Activated CD4-positive, alpha-beta T cell treated with anti-CD3 and anti-CD28 coated beads, Interleukin-2, amount 10 ng/mL, durations not matched to agents 24 days and 14 days (primary cell): ENCODE measurements at regions of chr1 and their contacts with region 1.

Region 1: DNA sequence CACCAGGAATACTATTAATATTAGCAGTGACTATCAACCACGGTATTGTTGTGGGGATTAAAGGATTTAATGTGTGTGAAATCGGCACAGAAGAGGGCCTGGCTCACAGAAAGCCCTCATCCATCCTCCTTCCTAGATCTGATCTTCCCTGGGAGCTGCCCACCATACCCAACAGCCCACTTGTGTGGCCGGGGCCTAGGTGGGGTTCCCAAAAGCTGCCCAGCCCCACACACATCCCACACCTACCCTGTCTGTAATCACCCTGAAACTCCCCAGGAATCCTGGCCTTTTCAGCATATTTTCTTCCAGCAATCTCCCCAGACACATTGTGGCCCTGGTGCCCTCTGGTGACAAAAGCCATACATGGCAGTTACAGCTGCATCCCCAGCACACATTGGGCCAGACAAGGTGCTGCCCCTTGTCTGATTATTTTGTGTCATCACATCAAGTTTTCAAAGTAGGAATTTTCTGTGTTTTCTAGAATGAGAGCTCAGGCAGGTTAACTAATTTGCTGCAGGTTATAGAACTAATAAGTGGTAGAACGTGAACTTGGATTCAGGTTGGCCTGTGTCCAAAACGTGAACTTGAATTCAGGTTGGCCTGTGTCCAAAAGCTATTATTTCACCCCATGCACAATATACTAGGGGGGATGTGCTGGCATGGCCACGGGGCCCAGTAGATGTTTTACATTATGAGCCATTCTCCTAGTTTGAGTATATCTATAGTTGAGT is 5.3 kb upstream of the SLC6A9 start:
- DNase-seq: peak; percentile 91
- H3K4me3 Mint-ChIP-seq: no peak overlapping the region
- H3K27ac Mint-ChIP-seq: peak overlapping the region; percentile 18
- H3K4me1 Mint-ChIP-seq: peaks cover 14% of the 10 kb centered on the region
- H3K27me3 Mint-ChIP-seq: peaks cover 11% of the 10 kb centered on the region

Region 2: DNA sequence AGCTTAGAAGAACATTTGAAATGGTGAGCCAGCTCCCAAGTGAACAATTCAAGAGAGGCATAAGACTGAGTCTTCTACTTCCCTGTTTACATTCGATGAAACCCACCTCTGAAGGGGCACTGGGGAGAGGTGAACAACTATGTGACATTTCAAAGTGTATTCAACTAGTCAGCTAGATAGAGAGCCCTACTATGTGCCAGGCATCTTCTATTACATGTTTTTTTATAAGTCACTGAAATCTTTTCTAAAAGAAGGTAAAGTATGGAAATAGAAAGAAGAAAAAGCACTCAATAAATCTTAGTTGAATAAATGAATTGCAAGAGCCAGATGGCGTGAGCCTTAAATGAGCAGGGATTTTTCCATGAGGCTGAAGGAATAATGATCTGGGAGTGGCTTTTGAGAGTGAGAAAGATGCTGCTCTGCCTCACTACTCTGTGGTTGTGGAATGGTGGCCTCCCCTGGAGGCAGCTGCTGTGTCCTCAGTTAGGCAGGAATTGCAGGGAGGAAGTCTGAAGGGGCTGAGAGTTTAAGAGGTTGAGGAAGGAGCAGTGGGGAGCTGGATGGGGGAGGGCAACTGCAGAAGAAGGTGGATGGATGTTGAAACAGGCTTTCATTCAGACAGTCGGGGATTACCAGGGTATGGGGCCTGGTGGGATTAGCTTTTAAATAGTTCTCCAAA is 516.3 kb before region 1 on chr1:
- intact Hi-C with region 1: no loop called
- DNase-seq: no peak
- H3K4me3 Mint-ChIP-seq: no peak overlapping the region
- H3K27ac Mint-ChIP-seq: no peak overlapping the region
- H3K4me1 Mint-ChIP-seq: no peaks in the 10 kb centered on the region
- H3K27me3 Mint-ChIP-seq: peaks cover 44% of the 10 kb centered on the region

Region 3: DNA sequence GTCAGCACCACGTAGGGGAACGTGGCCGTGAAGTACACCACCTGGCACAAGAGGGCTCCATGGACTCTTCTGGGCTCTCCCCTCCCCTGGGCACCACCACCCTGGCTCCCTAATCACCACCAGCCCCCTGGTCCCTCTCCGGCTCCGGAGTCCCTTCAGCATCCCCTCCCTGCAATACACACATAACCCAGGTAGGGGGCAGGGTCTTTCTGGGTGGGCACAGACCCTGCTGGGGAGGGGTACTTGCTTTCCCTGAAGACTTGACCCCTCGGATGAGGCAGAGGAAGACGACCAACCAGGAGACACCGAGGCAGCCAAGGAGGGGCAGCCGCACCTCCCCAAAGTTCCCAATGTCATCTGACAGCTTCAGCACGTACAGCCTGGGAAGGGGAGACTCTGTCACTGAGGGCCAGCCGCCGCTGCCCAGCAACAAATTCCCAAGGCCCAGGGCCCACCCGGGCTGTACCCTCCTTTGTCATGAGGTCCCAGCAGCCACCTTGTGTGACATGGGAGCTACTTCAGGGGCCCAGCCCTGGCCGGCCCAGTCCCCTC is 33.9 kb before region 1 on chr1:
- intact Hi-C with region 1: loop called (anchors 1 kb)
- DNase-seq: no peak
- H3K4me3 Mint-ChIP-seq: no peak overlapping the region
- H3K27ac Mint-ChIP-seq: no peak overlapping the region
- H3K4me1 Mint-ChIP-seq: peaks cover 2% of the 10 kb centered on the region
- H3K27me3 Mint-ChIP-seq: no peaks in the 10 kb centered on the region

Region 4: DNA sequence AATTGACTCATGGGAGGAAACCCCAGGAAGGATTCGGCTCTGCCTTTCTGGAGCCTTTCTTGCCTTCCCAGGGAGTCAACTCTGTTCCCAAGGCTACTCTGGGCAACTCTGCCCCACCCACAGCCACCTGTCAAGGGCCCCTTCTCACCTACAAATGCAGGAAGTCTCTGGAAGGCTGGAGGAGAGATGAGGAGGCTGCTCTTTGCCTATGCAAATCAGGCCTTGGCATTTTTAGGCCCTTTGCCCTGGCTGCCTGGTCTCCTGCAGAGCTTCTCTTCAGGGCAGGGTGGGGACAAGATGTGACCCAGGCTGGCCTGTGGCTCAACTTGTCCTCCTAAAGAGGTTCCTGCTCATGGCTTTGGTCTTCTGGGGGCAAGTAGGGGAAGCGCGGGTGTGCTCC is 10.8 kb before region 1 on chr1:
- intact Hi-C with region 1: no loop called
- DNase-seq: no peak
- H3K4me3 Mint-ChIP-seq: no peak overlapping the region
- H3K27ac Mint-ChIP-seq: no peak overlapping the region
- H3K4me1 Mint-ChIP-seq: peaks cover 15% of the 10 kb centered on the region
- H3K27me3 Mint-ChIP-seq: no peaks in the 10 kb centered on the region

Region 5: GRCh38 chr1:44144962-44145756 is 108.6 kb after region 1 on chr1:
- intact Hi-C with region 1: no loop called
- DNase-seq: no peak
- H3K4me3 Mint-ChIP-seq: no peak overlapping the region
- H3K27ac Mint-ChIP-seq: no peak overlapping the region
- H3K4me1 Mint-ChIP-seq: no peaks in the 10 kb centered on the region
- H3K27me3 Mint-ChIP-seq: peaks cover 4% of the 10 kb centered on the region